PC-3 (cell line): ENCODE measurements at regions of chr4 and their contacts with region 1.

Region 1: DNA sequence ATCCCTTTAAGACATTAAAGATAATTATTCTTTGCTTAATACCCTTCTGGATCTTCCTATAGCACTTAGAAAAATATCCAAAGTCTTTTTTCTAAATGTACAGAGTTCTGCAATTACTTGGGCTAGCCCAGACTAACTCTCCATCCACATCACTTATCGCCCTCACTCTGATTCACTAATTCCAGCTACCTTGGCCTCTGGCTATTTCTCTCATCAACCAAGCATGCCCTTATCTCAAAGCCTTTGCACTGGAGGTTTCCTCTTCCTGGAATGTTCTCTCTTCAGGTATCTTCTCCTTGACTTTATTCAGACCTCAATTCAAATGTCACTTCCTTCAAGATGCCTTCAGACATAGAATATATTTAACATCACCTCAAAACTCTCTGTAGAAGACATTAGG is 345.1 kb upstream of the SMIM31 start:
- DNase-seq: no peak
- ATAC-seq: no peak
- H3K4me3 ChIP-seq: no peak overlapping the region
- H3K27ac ChIP-seq: no peak overlapping the region
- H3K4me1 ChIP-seq: peaks cover 9% of the 10 kb centered on the region; the same call in 1 of the 2 replicates
- H3K27me3 ChIP-seq: no peaks in the 10 kb centered on the region
- CTCF ChIP-seq: no peak

Region 2: GRCh38 chr4:164350061-164350460 is 58.8 kb before region 1 on chr4:
- CTCF ChIA-PET with region 1: no interaction called
- POLR2A ChIA-PET with region 1: no interaction called
- intact Hi-C with region 1: loop called (anchors 5 kb)
- DNase-seq: peak; percentile 76
- ATAC-seq: peak; percentile 74
- H3K4me3 ChIP-seq: peak overlapping the region; percentile 58
- H3K27ac ChIP-seq: peak overlapping the region; percentile 49
- H3K4me1 ChIP-seq: peaks cover 21% of the 10 kb centered on the region
- H3K27me3 ChIP-seq: no peaks in the 10 kb centered on the region
- CTCF ChIP-seq: no peak